ENCODE measurements at regions of chr11 and their contacts with region 1.

Region 1: GRCh38 chr11:66677599-66678375 is at the start of gene RBM4B:
- DNase-seq: peak; percentile 92 to 99 (median 96)
- ATAC-seq: peak; percentile 84
- H3K4me3 ChIP-seq: peak within 1 kb of the TSS; percentile 79 to 83
- H3K4me3 Mint-ChIP-seq: peak within 1 kb of the TSS; percentile 88
- H3K27ac ChIP-seq: peak within 1 kb of the TSS; percentile 92 to 97
- H3K27ac Mint-ChIP-seq: peak within 1 kb of the TSS; percentile 99
- H3K4me1 ChIP-seq: peaks cover 24% of the 10 kb centered on the region
- H3K4me1 Mint-ChIP-seq: peaks cover 36% of the 10 kb centered on the region
- H3K27me3 ChIP-seq: no peaks in the 10 kb centered on the region
- H3K27me3 Mint-ChIP-seq: no peaks in the 10 kb centered on the region
- CTCF ChIP-seq: no peak
- total RNA-seq, gene RBM4B: 5.4 to 5.6 TPM

Region 2: GRCh38 chr11:66414120-66414934 is 263.5 kb before region 1 on chr11:
- CTCF ChIA-PET with region 1: interaction called, 77 read pairs
- POLR2A ChIA-PET with region 1: no interaction called
- intact Hi-C with region 1: no loop called
- DNase-seq: no peak
- ATAC-seq: no peak
- H3K4me3 ChIP-seq: no peak overlapping the region
- H3K4me3 Mint-ChIP-seq: no peak overlapping the region
- H3K27ac ChIP-seq: no peak overlapping the region
- H3K27ac Mint-ChIP-seq: no peak overlapping the region
- H3K4me1 ChIP-seq: peaks cover 1% of the 10 kb centered on the region
- H3K4me1 Mint-ChIP-seq: peaks cover 5% of the 10 kb centered on the region
- H3K27me3 ChIP-seq: peaks cover 17 to 29% of the 10 kb centered on the region in 2 experiments
- H3K27me3 Mint-ChIP-seq: peaks cover 71% of the 10 kb centered on the region
- CTCF ChIP-seq: no peak

Region 3: GRCh38 chr11:66480117-66480938 is 197.5 kb before region 1 on chr11 and contains the start of gene DPP3:
- CTCF ChIA-PET with region 1: interaction called, 4 read pairs
- POLR2A ChIA-PET with region 1: interaction called, 11 read pairs
- intact Hi-C with region 1: loop called (anchors 1 to 5 kb)
- DNase-seq: peak; percentile 91 to 97 (median 95)
- ATAC-seq: peak; percentile 98
- H3K4me3 ChIP-seq: peak within 1 kb of the TSS; percentile 90 to 93
- H3K4me3 Mint-ChIP-seq: peak within 1 kb of the TSS; percentile 89
- H3K27ac ChIP-seq: peak within 1 kb of the TSS; percentile 70 to 90
- H3K27ac Mint-ChIP-seq: peak within 1 kb of the TSS; percentile 89
- H3K4me1 ChIP-seq: peaks cover 17% of the 10 kb centered on the region
- H3K4me1 Mint-ChIP-seq: peaks cover 31% of the 10 kb centered on the region
- H3K27me3 ChIP-seq: no peaks in the 10 kb centered on the region
- H3K27me3 Mint-ChIP-seq: no peaks in the 10 kb centered on the region
- CTCF ChIP-seq: no peak
- total RNA-seq, gene DPP3: 13.7 to 15.6 TPM

Region 4: GRCh38 chr11:66568124-66568916 is 109.5 kb before region 1 on chr11 and contains the start of gene CTSF:
- CTCF ChIA-PET with region 1: interaction called, 36 read pairs
- POLR2A ChIA-PET with region 1: interaction called, 15 read pairs
- intact Hi-C with region 1: no loop called
- DNase-seq: peak; percentile 35 to 85 (median 74)
- ATAC-seq: peak; percentile 95
- H3K4me3 ChIP-seq: peak within 1 kb of the TSS; percentile 46 to 74
- H3K4me3 Mint-ChIP-seq: peak within 1 kb of the TSS; percentile 82
- H3K27ac ChIP-seq: peak within 1 kb of the TSS in 1 of 2 experiments; percentile 17
- H3K27ac Mint-ChIP-seq: peak within 1 kb of the TSS; percentile 81
- H3K4me1 ChIP-seq: peaks cover 12% of the 10 kb centered on the region
- H3K4me1 Mint-ChIP-seq: peaks cover 10% of the 10 kb centered on the region
- H3K27me3 ChIP-seq: peaks cover 0 to 3% of the 10 kb centered on the region in 2 experiments
- H3K27me3 Mint-ChIP-seq: no peaks in the 10 kb centered on the region
- CTCF ChIP-seq: no peak
- total RNA-seq, gene CTSF: 13.1 to 14.1 TPM

Region 5: DNA sequence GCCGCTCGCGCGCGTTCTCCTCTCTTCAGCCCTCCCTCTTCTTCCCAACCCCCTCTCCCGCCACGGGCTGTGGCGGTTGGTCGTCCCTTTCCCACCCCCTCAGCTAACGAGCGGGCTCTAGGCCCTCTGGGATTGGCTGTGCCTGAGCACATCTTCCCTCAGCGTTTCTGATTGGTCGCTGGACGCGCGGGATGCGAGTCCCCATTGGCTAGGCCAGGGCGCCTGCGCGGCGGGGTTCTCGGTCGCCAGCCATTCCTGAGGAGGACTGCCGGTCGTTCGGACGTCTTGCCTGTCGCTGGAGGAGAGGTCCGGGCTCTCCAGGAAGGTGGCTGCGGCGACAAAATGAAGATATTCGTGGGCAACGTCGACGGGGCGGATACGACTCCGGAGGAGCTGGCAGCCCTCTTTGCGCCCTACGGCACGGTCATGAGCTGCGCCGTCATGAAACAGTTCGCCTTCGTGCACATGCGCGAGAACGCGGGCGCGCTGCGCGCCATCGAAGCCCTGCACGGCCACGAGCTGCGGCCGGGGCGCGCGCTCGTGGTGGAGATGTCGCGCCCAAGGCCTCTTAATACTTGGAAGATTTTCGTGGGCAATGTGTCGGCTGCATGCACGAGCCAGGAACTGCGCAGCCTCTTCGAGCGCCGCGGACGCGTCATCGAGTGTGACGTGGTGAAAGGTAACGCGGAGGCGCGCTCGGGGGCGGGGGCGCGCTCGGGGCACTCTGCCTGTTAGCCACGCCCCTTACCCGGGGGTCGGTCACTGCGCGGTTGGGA is 61.2 kb before region 1 on chr11 and contains the start of gene RBM14:
- CTCF ChIA-PET with region 1: interaction called, 24 read pairs
- POLR2A ChIA-PET with region 1: interaction called, 57 read pairs
- intact Hi-C with region 1: loop called (anchors 1 kb)
- DNase-seq: peak; percentile 96 to 100 (median 98)
- ATAC-seq: peak; percentile 82
- H3K4me3 ChIP-seq: peak within 1 kb of the TSS; percentile 88 to 93
- H3K4me3 Mint-ChIP-seq: peak within 1 kb of the TSS; percentile 98
- H3K27ac ChIP-seq: peak within 1 kb of the TSS; percentile 94 to 99
- H3K27ac Mint-ChIP-seq: peak within 1 kb of the TSS; percentile 97
- H3K4me1 ChIP-seq: peaks cover 43% of the 10 kb centered on the region
- H3K4me1 Mint-ChIP-seq: peaks cover 38% of the 10 kb centered on the region
- H3K27me3 ChIP-seq: no peaks in the 10 kb centered on the region
- H3K27me3 Mint-ChIP-seq: no peaks in the 10 kb centered on the region
- CTCF ChIP-seq: no peak
- total RNA-seq, gene RBM14: 198 to 213 TPM

Region 6: DNA sequence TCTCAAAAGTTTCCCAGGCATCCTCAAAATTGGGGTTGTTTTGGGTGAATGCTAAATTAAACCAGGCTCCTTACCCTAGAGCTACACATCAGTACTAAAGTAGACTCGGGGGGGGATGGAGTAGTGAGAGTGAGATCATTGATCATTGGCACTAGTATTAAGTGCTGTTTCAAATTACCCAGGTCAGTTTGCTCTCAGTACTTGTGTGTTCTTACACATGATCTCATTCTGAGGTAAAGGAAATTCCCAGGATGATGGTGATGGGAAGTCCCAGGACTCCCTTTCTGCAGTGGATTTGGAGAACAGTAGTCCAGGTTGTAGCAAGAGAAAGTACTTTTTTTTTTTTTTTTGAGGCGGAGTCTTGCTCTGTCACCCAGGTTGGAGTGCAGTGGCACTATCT is 26.8 kb before region 1 on chr11:
- CTCF ChIA-PET with region 1: interaction called, 32 read pairs
- POLR2A ChIA-PET with region 1: interaction called, 3 read pairs
- intact Hi-C with region 1: no loop called
- DNase-seq: peak in 2 of 9 experiments; percentile 17 to 47
- ATAC-seq: no peak
- H3K4me3 ChIP-seq: no peak overlapping the region
- H3K4me3 Mint-ChIP-seq: no peak overlapping the region
- H3K27ac ChIP-seq: no peak overlapping the region
- H3K27ac Mint-ChIP-seq: no peak overlapping the region
- H3K4me1 ChIP-seq: peaks cover 30% of the 10 kb centered on the region
- H3K4me1 Mint-ChIP-seq: peaks cover 58% of the 10 kb centered on the region
- H3K27me3 ChIP-seq: no peaks in the 10 kb centered on the region
- H3K27me3 Mint-ChIP-seq: no peaks in the 10 kb centered on the region
- CTCF ChIP-seq: no peak

Region 7: GRCh38 chr11:66842896-66843775 is 165.3 kb after region 1 on chr11 and contains the start of gene RCE1:
- CTCF ChIA-PET with region 1: interaction called, 8 read pairs
- POLR2A ChIA-PET with region 1: interaction called, 12 read pairs
- intact Hi-C with region 1: loop called in 1 of 2 experiments (anchors 1 kb)
- DNase-seq: peak; percentile 85 to 96 (median 89)
- ATAC-seq: peak; percentile 88
- H3K4me3 ChIP-seq: peak within 1 kb of the TSS; percentile 68 to 91
- H3K4me3 Mint-ChIP-seq: peak within 1 kb of the TSS; percentile 86
- H3K27ac ChIP-seq: peak within 1 kb of the TSS; percentile 99 to 100
- H3K27ac Mint-ChIP-seq: peak within 1 kb of the TSS; percentile 93
- H3K4me1 ChIP-seq: peaks cover 47% of the 10 kb centered on the region
- H3K4me1 Mint-ChIP-seq: peaks cover 51% of the 10 kb centered on the region
- H3K27me3 ChIP-seq: no peaks in the 10 kb centered on the region
- H3K27me3 Mint-ChIP-seq: no peaks in the 10 kb centered on the region
- CTCF ChIP-seq: no peak
- total RNA-seq, gene RCE1: 68.9 to 72.2 TPM

Region 8: DNA sequence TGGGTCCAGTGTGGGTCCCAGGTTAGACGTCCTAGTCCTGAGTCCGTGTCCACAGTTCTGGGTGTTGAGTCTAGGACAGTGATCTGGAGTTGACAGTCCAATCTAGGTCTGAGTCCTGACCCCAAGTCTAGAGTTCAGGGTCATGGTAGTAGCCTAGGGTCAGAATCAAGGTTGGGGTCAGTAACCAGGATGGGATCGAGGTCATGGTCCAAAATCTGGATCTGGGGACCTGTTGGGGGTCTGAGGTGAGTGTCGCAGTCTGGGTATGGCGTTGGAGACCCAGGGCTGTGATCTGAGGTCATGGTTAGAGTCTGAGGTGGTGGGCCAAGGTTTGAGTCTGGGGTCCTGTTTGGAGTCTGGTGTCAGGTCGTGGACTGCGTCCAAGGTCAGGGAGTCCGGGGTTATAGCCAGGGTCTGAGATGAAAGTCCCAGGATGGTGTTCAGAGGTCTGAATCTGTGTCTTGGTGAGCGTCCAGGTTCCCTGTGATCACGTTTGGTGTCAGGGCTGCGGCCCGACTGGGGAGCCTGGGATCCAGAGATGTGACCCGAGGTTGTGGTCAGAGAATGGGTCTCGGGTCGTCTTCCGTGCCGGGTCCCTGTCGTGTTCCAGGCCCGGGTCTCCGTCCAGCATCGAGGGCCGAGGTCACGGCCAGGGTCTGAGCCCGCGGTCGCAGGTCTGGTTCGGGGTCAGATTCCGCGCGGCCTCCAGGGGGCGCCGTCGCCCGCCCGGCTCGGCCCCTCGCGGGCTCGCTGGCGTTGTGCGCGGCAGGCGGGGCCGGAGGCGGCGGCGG is 588.0 kb after region 1 on chr11:
- CTCF ChIA-PET with region 1: no interaction called
- POLR2A ChIA-PET with region 1: no interaction called
- intact Hi-C with region 1: no loop called
- DNase-seq: peak; percentile 56 to 91 (median 79)
- ATAC-seq: peak; percentile 35
- H3K4me3 ChIP-seq: no peak overlapping the region
- H3K4me3 Mint-ChIP-seq: peak overlapping the region; percentile 81
- H3K27ac ChIP-seq: peak overlapping the region in 1 of 2 experiments; percentile 51
- H3K27ac Mint-ChIP-seq: peak overlapping the region; percentile 86
- H3K4me1 ChIP-seq: peaks cover 61% of the 10 kb centered on the region
- H3K4me1 Mint-ChIP-seq: peaks cover 69% of the 10 kb centered on the region
- H3K27me3 ChIP-seq: peaks cover 0 to 4% of the 10 kb centered on the region in 2 experiments
- H3K27me3 Mint-ChIP-seq: no peaks in the 10 kb centered on the region
- CTCF ChIP-seq: peak; percentile 67